K562 (cell line): ENCODE measurements at regions of chr3 and their contacts with region 1.

Region 1: GRCh38 chr3:122754929-122755328 is 38.7 kb downstream of the HSPBAP1 start:
- DNase-seq: peak; percentile 15 to 52 (median 32)
- ATAC-seq: peak; percentile 92
- H3K4me3 ChIP-seq: no peak overlapping the region
- H3K27ac ChIP-seq: no peak overlapping the region
- H3K4me1 ChIP-seq: no peaks in the 10 kb centered on the region
- H3K27me3 ChIP-seq: no peaks in the 10 kb centered on the region
- CTCF ChIP-seq: peak; percentile 65 to 76 (median 76)
- EP300 ChIP-seq: no peak
- POLR2A ChIP-seq: no peak
- RAD21 ChIP-seq: peak; percentile 43 to 73

Region 2: GRCh38 chr3:122169908-122170307 is 585.0 kb before region 1 on chr3:
- CTCF ChIA-PET with region 1: no interaction called
- POLR2A ChIA-PET with region 1: no interaction called
- in situ Hi-C with region 1: no loop called
- intact Hi-C with region 1: no loop called
- DNase-seq: no peak
- ATAC-seq: no peak
- H3K4me3 ChIP-seq: no peak overlapping the region
- H3K27ac ChIP-seq: no peak overlapping the region
- H3K4me1 ChIP-seq: no peaks in the 10 kb centered on the region
- H3K27me3 ChIP-seq: no peaks in the 10 kb centered on the region
- CTCF ChIP-seq: no peak
- EP300 ChIP-seq: no peak
- POLR2A ChIP-seq: no peak
- RAD21 ChIP-seq: no peak

Region 3: DNA sequence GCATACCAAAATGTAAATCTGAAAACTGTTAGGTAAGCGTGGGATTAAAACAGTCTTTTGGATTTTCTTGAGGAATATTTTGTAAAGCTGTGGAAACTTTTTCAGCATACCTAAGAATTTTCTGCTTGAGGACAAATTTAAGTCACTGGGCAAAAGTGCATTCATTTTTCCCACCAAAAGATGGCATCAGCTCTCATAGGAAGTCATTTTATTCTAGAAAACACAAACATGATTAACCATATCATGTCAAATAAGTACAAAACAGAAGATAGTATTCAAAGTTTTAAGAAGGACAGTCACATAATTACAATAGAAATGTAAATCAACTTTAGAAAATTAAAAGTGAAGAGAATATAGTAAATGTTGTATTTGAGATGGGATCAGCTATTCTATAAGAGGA is 103.4 kb after region 1 on chr3:
- CTCF ChIA-PET with region 1: no interaction called
- POLR2A ChIA-PET with region 1: no interaction called
- in situ Hi-C with region 1: no loop called
- intact Hi-C with region 1: loop called (anchors 10 kb)
- DNase-seq: no peak
- ATAC-seq: no peak
- H3K4me3 ChIP-seq: no peak overlapping the region
- H3K27ac ChIP-seq: no peak overlapping the region
- H3K4me1 ChIP-seq: no peaks in the 10 kb centered on the region
- H3K27me3 ChIP-seq: no peaks in the 10 kb centered on the region
- CTCF ChIP-seq: peak in 1 of 3 experiments; percentile 43; a peak in 2 of 6 replicates
- EP300 ChIP-seq: no peak
- POLR2A ChIP-seq: no peak
- RAD21 ChIP-seq: peak in 1 of 2 experiments; percentile 31; a peak in 2 of 4 replicates

Region 4: GRCh38 chr3:122921791-122922651 is 167.1 kb after region 1 on chr3:
- CTCF ChIA-PET with region 1: no interaction called
- POLR2A ChIA-PET with region 1: no interaction called
- in situ Hi-C with region 1: no loop called
- intact Hi-C with region 1: loop called (anchors 10 kb)
- DNase-seq: peak; percentile 55 to 81 (median 76)
- ATAC-seq: peak; percentile 98
- H3K4me3 ChIP-seq: no peak overlapping the region; the same call in 1 of the 2 replicates
- H3K27ac ChIP-seq: no peak overlapping the region
- H3K4me1 ChIP-seq: peaks cover 0 to 9% of the 10 kb centered on the region in 2 experiments; a peak in 3 of 5 replicates
- H3K27me3 ChIP-seq: peaks cover 11 to 55% of the 10 kb centered on the region in 2 experiments; a peak in 4 of 5 replicates
- CTCF ChIP-seq: peak; percentile 28 to 63 (median 34); a peak in 4 of 6 replicates
- EP300 ChIP-seq: no peak
- POLR2A ChIP-seq: no peak
- RAD21 ChIP-seq: peak in 1 of 2 experiments; percentile 39; a peak in 1 of 4 replicates

Region 5: DNA sequence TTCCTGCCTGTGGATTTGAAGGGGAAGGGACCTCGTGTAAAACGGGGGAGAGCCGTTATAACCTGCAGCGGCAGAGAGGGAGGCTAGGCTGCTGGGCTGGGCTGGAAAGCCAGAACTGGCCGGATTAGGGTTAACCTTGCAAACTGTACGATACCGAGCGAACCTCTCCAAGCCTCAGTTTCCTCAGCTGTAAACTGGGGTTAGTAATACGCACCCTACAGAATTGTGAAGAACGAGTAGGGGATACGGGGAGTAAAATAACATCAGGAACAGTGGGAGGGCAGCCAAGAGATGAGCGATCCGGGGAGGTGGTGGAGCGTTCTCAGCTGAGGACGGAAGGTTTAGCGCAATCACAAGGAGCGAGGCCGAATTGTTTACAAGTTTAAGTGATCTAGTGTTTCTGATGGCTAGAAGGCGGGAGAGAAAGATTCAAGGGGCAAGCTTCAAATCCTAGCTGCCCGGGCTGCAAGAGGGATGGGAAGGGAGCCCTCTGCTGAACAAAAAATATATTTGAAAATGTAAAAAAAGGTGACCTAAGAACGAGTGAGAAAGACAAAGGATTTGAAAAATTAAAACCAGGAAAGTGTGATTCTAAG is 273.4 kb after region 1 on chr3:
- CTCF ChIA-PET with region 1: interaction called, 7 read pairs
- POLR2A ChIA-PET with region 1: no interaction called
- in situ Hi-C with region 1: no loop called
- intact Hi-C with region 1: loop called (anchors 10 kb)
- DNase-seq: peak; percentile 47 to 56 (median 52)
- ATAC-seq: peak; percentile 71
- H3K4me3 ChIP-seq: peak overlapping the region; percentile 18; the same call in 1 of the 2 replicates
- H3K27ac ChIP-seq: no peak overlapping the region
- H3K4me1 ChIP-seq: peaks cover 5 to 20% of the 10 kb centered on the region in 2 experiments; a peak in 4 of 5 replicates
- H3K27me3 ChIP-seq: peaks cover 15 to 40% of the 10 kb centered on the region in 2 experiments; a peak in 4 of 5 replicates
- CTCF ChIP-seq: peak; percentile 49 to 59 (median 49); a peak in 5 of 6 replicates
- EP300 ChIP-seq: no peak
- POLR2A ChIP-seq: no peak
- RAD21 ChIP-seq: peak; percentile 54 to 57